Mammary epithelial cell (primary cell): ENCODE measurements at regions of chr11 and their contacts with region 1.

Region 1: GRCh38 chr11:100863080-100863581 is 176.0 kb downstream of the ARHGAP42 start:
- DNase-seq: peak; percentile 21
- H3K4me3 ChIP-seq: no peak overlapping the region
- H3K27ac ChIP-seq: no peak overlapping the region
- H3K4me1 ChIP-seq: no peaks in the 10 kb centered on the region
- H3K27me3 ChIP-seq: no peaks in the 10 kb centered on the region
- CTCF ChIP-seq: no peak

Region 2: DNA sequence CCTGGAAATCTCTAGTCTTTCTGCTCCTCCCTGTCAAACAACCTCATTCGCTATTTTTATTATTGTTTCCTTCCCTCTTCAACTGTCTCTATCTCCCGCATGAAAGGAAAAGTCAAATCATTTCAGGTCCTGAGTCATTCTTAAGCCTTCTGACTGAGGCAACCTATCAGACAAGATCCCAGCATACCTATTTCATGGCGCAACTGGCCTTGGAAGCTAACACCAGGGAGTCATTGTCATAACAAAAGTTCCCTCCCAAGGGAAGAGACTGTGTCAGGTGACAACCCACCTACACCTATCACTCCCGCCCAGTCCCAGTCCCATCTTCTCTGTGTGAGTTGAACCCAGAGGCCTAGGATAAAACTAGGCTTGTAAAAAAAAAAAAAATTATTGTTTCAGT is 186.2 kb before region 1 on chr11:
- CTCF ChIA-PET with region 1: no interaction called
- dilution Hi-C with region 1: no loop called
- in situ Hi-C with region 1: loop called (anchors 10 kb)
- intact Hi-C with region 1: no loop called
- DNase-seq: peak; percentile 39
- H3K4me3 ChIP-seq: no peak overlapping the region
- H3K27ac ChIP-seq: no peak overlapping the region
- H3K4me1 ChIP-seq: peaks cover 7% of the 10 kb centered on the region
- H3K27me3 ChIP-seq: no peaks in the 10 kb centered on the region
- CTCF ChIP-seq: no peak